Calu3 (cell line): ENCODE measurements at regions of chr12 and their contacts with region 1.

Region 1: DNA sequence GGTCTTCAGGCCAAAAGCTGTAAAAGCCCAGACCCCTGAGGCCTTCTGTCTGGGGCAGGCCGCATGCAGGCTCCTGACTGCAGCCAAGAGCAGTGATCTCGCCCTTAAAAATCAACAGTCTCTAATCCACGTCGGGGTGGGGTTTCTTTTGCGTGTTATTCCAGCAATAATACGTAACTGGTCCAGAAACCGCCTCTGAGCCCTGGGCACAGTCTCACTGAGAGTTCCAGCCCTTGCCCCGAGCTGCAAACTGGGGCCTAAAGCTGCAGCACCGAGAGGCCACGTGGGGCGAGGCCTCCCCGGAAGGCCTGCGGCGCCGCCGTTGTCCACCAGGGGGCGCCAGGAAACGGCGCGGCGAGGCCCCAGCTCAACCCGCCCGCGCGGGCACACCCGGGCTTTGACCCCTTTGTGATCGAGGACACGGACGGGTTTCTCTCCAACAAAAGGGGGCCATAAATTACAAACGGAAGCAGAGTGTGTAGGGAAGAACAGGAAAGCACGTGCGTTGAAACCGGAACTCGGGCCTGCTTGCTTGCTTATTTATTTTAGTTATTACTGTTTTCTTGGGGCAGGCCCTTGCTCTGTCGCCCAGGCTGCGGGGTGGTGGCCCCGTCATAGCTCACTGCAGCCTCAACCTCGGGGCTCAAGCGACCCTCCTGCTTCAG is 87.2 kb downstream of the NINJ2 start:
- DNase-seq: peak; percentile 90
- H3K4me3 Mint-ChIP-seq: peak overlapping the region; percentile 33
- H3K27ac Mint-ChIP-seq: no peak overlapping the region
- H3K4me1 Mint-ChIP-seq: peaks cover 26% of the 10 kb centered on the region
- H3K27me3 Mint-ChIP-seq: peaks cover 18% of the 10 kb centered on the region
- CTCF ChIP-seq: peak; percentile 98

Region 2: GRCh38 chr12:334125-334524 is 242.0 kb before region 1 on chr12:
- CTCF ChIA-PET with region 1: no interaction called
- intact Hi-C with region 1: no loop called
- DNase-seq: no peak
- H3K4me3 Mint-ChIP-seq: no peak overlapping the region
- H3K27ac Mint-ChIP-seq: no peak overlapping the region
- H3K4me1 Mint-ChIP-seq: peaks cover 8% of the 10 kb centered on the region
- H3K27me3 Mint-ChIP-seq: no peaks in the 10 kb centered on the region
- CTCF ChIP-seq: no peak

Region 3: GRCh38 chr12:591167-592023 is 15.3 kb after region 1 on chr12:
- CTCF ChIA-PET with region 1: no interaction called
- intact Hi-C with region 1: no loop called
- DNase-seq: no peak
- H3K4me3 Mint-ChIP-seq: no peak overlapping the region
- H3K27ac Mint-ChIP-seq: no peak overlapping the region
- H3K4me1 Mint-ChIP-seq: no peaks in the 10 kb centered on the region
- H3K27me3 Mint-ChIP-seq: peaks cover 73% of the 10 kb centered on the region
- CTCF ChIP-seq: no peak

Region 4: DNA sequence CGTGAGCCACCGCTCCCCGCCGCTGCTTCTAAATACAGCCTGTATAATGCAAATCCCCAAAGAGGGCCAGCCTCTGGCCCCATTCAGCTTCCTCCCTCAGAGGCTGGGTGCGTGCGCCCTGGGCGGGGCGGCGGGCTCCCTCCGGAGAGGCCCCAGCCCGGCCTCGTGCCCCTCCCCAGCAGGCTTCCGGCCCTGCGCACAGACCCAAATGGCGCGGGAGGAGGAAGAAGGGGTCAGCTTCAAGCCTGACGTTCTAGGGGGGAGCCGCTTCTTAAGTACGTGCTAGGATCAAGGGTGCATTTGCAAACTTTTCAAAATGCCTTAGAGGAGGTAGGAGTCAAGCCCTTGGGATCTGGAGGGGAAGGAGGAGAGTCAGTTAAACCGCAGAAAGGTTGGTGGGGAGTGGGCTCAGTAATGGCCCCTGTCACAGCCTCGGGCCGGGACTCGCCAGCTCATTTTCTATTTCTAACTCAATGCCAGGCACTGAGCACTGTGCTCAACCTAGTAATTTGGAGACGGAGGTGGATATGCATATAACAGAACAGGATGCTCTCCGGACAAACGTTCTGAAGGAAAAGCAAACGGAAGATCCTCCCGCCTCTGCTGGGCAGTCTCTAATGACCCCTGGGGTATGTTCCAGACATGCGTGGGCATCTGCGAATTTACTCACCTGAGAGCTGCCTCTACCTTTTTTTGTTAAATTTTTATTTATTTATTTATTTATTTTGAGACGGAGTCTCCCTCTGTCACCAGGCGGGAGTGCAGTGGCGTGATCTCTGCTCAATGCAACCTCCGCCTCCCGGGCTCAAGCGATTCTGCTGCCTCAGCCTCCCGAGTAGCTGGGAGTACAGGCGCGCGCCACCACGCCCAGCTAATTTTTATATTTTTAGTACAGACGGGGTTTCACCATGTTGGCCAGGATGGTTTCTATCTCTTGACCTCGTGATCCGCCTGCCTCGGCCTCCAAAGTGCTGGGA is 54.9 kb after region 1 on chr12:
- CTCF ChIA-PET with region 1: no interaction called
- intact Hi-C with region 1: loop called (anchors 10 kb)
- DNase-seq: no peak
- H3K4me3 Mint-ChIP-seq: no peak overlapping the region
- H3K27ac Mint-ChIP-seq: peak overlapping the region; percentile 86
- H3K4me1 Mint-ChIP-seq: peaks cover 17% of the 10 kb centered on the region
- H3K27me3 Mint-ChIP-seq: no peaks in the 10 kb centered on the region
- CTCF ChIP-seq: no peak